HEK293 (cell line): ENCODE measurements at regions of chr9 and their contacts with region 1.

Region 1: DNA sequence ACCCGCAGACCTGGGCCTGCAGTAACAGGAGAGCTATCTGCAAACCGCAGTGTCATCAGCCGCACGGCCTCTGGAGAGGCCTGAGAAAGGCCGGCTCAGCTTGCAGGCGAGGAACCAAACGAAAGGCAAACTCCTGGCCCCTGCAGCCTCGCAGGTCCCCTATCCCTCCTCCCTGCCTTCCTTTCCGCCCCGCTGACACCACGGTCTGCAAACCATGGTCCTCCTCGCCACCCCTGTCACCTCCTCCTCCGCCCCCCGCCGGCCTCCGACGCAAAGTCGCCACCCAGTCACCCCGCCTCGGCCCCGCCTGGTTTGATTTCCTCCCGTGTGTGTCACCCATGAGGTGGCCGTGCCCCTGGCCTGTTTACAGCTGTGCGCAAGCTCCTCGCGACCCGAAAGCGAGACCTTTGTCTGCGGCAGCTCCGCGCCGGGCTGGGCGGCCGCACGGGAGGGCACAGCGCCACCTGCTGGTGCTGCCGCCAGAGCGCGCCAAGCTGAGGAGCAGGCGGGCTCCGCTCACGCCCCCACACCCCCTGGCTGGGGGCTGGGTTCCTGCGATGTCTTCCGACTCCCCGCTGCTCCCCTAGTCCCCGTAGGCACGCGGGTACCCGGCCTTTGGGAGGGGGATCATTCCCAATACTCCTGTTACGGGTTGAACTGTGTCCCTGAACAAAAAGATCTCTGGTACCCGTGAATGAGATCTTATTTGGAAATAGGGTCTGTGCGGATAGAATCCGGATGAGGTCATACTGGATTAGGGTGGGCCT is 19.4 kb downstream of the GBGT1 start:
- H3K4me3 ChIP-seq: peak overlapping the region; percentile 23
- H3K27ac ChIP-seq: no peak overlapping the region; the same call in 1 of the 2 replicates
- H3K4me1 ChIP-seq: peaks cover 3% of the 10 kb centered on the region; the same call in 1 of the 2 replicates
- CTCF ChIP-seq: peak; percentile 99

Region 2: DNA sequence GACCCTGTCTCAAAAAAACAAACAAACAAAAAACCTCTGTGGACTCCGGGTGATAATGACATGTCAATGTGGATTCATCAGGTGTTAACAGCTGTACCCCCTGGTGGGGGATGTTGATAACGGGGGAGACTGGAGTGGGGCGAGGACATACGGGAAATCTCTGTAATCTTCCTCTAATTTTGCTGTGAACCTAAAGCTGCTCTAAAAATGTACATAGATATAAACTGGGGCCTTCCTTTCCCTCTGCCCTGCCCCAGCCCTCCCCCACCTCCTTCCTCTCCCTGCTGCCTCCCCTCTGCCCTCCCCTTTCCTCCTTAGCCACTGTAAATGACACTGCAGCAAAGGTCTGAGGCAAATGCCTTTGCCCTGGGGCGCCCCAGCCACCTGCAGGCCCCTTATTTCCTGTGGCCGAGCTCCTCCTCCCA is 83.9 kb before region 1 on chr9:
- CTCF ChIA-PET with region 1: interaction called, 11 read pairs
- POLR2A ChIA-PET with region 1: no interaction called
- H3K4me3 ChIP-seq: no peak overlapping the region
- H3K27ac ChIP-seq: no peak overlapping the region
- H3K4me1 ChIP-seq: peaks cover 6% of the 10 kb centered on the region; the same call in 1 of the 2 replicates
- CTCF ChIP-seq: no peak

Region 3: GRCh38 chr9:133089271-133089671 is 55.0 kb before region 1 on chr9:
- CTCF ChIA-PET with region 1: interaction called, 21 read pairs
- POLR2A ChIA-PET with region 1: no interaction called
- H3K4me3 ChIP-seq: no peak overlapping the region
- H3K27ac ChIP-seq: no peak overlapping the region
- H3K4me1 ChIP-seq: no peaks in the 10 kb centered on the region
- CTCF ChIP-seq: no peak

Region 4: GRCh38 chr9:133121198-133121939 is 23.0 kb before region 1 on chr9 and contains the start of gene RALGDS:
- CTCF ChIA-PET with region 1: interaction called, 342 read pairs
- POLR2A ChIA-PET with region 1: interaction called, 9 read pairs
- H3K4me3 ChIP-seq: peak within 1 kb of the TSS; percentile 66
- H3K27ac ChIP-seq: peak within 1 kb of the TSS; percentile 74; the same call in 1 of the 2 replicates
- H3K4me1 ChIP-seq: peaks cover 5% of the 10 kb centered on the region; the same call in 1 of the 2 replicates
- CTCF ChIP-seq: no peak

Region 5: DNA sequence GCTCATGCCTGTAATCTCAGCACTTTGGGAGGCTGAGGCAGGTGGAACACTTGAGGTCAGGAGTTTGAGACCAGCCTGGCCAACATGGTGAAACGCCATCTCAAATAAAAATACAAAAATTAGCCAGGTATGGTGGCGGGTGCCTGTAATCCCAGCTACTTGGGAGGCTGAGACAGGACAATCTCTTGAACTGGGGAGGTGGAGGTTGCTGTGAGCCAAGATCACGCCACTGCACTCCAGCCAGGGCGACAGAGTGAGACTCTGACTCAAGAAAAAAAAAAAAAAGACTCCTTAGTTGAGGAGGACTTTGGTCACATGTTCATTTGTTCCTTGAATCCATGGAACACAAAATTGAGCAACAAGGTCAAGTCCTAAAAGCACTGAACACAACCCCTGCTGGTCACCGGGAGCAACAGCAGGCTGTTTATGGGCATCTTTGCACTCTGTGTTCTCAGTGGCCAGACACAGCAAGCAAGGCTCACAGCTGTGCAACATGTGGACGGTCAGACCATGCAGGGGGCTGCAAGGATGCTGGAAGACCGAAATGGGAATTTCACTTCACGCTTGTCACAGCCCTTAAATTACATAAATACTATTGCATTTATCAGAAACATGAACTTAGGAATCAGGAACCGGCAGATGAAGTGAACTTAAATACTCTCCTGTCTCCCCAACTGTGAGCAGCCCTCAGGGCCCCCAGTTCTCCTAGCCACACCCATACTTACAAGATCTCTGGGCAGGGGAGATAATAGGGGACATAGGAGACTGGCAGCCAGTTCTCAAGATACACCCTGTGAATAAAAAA is 16.6 kb after region 1 on chr9:
- CTCF ChIA-PET with region 1: interaction called, 42 read pairs
- POLR2A ChIA-PET with region 1: interaction called, 5 read pairs
- H3K4me3 ChIP-seq: no peak overlapping the region
- H3K27ac ChIP-seq: no peak overlapping the region
- H3K4me1 ChIP-seq: no peaks in the 10 kb centered on the region
- CTCF ChIP-seq: peak; percentile 59; the same call in 1 of the 2 replicates

Region 6: DNA sequence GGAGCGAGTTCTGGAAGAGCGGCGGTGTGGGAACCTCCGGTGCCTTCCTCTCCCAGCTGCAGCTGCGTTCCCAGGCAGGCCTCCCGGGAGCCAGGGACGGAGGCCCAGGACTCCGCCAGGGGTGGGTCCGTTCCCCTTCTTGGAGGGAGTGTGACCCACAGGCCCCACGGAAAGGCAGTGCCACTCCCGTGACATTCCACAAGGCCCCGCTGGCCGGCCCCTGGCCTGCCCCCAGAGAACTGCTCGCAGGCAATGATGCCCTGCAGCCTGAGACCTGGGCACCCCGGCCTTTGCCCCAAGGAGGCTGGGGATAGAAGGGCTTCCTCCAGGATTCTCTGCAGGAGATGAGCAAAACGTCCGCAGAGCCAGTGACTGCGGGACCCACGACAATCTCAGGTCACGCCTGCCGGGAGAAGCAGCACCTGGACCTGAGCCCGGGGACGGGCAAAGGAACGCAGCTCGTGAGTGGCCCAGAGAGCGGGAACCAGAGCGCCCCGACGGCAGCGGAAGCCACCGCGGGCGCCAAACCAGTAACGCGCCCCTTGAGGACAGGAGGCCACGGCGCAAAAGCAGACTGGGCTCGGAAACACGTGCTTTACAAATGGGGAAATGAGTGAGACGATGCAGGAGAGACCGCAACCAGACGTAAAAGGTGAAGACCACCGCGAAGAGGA is 55.5 kb after region 1 on chr9:
- CTCF ChIA-PET with region 1: no interaction called
- POLR2A ChIA-PET with region 1: no interaction called
- H3K4me3 ChIP-seq: no peak overlapping the region
- H3K27ac ChIP-seq: no peak overlapping the region
- H3K4me1 ChIP-seq: no peaks in the 10 kb centered on the region
- CTCF ChIP-seq: no peak